ENCODE measurements at regions of chr5 and their contacts with region 1.

Region 1: DNA sequence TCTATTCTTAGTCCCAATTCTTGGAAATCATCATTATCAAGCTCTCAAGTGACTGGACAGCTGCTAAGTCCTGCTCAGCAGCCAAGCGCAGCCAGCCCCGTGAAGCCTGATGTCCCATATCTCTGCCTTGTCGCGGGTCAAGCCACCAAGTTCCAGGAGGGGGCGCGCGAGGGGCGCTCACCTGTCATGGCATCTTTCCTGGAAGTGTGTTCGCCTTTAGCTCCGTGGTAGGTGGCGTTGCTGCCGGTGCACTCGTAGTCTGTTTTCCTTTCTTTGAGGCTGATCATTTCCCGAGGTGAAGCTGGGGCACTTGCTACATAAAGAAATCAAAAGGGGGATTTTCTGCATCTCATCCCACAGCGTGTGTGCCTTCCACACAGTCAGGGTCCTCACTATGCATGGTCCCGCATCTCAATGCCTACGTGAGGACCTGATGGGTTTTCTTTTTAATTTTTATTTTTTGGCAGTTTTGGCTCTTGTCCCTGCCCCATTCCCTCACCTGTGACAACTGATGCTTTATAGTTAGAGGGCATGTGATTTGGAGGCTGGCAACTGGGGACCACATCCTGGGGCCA is 227.0 kb upstream of the DAP start:
- DNase-seq: peak; percentile 87
- H3K4me3 Mint-ChIP-seq: peak overlapping the region; percentile 32
- H3K27ac Mint-ChIP-seq: peak overlapping the region; percentile 15
- H3K4me1 Mint-ChIP-seq: peaks cover 9% of the 10 kb centered on the region
- H3K27me3 Mint-ChIP-seq: peaks cover 22% of the 10 kb centered on the region

Region 2: DNA sequence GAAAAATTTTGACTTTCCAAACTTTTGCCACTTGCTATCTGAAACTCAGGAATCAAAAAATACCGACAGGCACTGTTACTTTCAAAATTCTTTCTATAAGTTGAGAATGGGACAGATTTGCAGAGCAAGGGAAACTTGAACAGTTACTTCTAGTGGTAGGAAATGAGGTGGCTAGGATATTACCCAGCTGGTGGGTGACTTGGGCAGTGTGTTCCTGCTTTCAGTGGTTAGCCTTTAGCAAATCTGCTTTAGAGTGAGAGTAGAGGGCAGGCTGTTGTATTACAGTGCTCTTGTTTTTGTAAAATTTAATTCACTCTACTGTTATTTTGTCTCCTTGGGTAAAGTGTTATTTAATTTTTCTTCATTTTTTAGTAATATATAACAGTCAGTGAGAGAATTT is 586.5 kb before region 1 on chr5:
- CTCF ChIA-PET with region 1: no interaction called
- intact Hi-C with region 1: no loop called
- DNase-seq: no peak
- H3K4me3 Mint-ChIP-seq: no peak overlapping the region
- H3K27ac Mint-ChIP-seq: no peak overlapping the region
- H3K4me1 Mint-ChIP-seq: no peaks in the 10 kb centered on the region
- H3K27me3 Mint-ChIP-seq: no peaks in the 10 kb centered on the region

Region 3: GRCh38 chr5:10695055-10695649 is 292.9 kb before region 1 on chr5:
- CTCF ChIA-PET with region 1: no interaction called
- intact Hi-C with region 1: loop called (anchors 5 kb)
- DNase-seq: peak; percentile 56
- H3K4me3 Mint-ChIP-seq: no peak overlapping the region
- H3K27ac Mint-ChIP-seq: no peak overlapping the region
- H3K4me1 Mint-ChIP-seq: peaks cover 39% of the 10 kb centered on the region
- H3K27me3 Mint-ChIP-seq: no peaks in the 10 kb centered on the region

Region 4: GRCh38 chr5:10707198-10708142 is 280.5 kb before region 1 on chr5:
- CTCF ChIA-PET with region 1: no interaction called
- intact Hi-C with region 1: no loop called
- DNase-seq: no peak
- H3K4me3 Mint-ChIP-seq: no peak overlapping the region
- H3K27ac Mint-ChIP-seq: no peak overlapping the region
- H3K4me1 Mint-ChIP-seq: peaks cover 30% of the 10 kb centered on the region
- H3K27me3 Mint-ChIP-seq: no peaks in the 10 kb centered on the region

Region 5: DNA sequence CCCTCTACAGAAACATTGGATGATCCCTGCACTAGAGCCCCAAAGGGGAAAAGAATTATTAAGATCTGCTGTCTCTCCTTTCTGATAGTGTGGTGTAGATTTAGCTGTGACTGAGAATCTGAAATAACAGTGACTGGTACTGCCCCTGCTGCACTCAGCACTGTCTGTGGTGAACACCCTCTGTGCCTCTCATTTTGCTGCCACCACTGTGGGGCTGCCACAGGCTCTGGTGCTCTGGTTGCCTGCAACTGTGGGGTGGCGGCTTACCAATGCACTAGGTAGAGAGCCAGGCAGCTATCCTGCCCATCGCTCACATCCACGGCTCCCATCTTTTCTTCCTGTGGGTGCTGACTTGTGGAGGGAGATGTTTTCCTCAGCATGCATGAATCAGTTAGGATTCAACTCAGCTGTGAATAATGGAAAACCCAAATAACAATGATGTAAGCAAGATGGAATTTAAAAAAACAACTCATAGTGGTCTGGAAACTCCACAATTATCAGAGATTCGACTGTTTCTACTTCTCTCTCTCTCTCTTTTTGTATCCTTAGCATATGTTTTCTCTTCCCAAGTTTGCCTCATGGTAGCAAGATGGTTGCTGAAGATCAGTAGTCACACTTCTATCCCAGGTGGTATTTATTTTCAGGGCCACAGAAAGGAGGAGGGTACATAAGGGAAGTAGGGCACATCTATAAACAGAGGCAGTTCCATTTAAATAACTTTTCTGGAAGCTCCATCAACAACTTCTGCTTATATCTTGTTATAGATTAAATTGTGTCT is 127.2 kb before region 1 on chr5:
- CTCF ChIA-PET with region 1: no interaction called
- intact Hi-C with region 1: no loop called
- DNase-seq: no peak
- H3K4me3 Mint-ChIP-seq: no peak overlapping the region
- H3K27ac Mint-ChIP-seq: no peak overlapping the region
- H3K4me1 Mint-ChIP-seq: peaks cover 2% of the 10 kb centered on the region
- H3K27me3 Mint-ChIP-seq: peaks cover 19% of the 10 kb centered on the region

Region 6: DNA sequence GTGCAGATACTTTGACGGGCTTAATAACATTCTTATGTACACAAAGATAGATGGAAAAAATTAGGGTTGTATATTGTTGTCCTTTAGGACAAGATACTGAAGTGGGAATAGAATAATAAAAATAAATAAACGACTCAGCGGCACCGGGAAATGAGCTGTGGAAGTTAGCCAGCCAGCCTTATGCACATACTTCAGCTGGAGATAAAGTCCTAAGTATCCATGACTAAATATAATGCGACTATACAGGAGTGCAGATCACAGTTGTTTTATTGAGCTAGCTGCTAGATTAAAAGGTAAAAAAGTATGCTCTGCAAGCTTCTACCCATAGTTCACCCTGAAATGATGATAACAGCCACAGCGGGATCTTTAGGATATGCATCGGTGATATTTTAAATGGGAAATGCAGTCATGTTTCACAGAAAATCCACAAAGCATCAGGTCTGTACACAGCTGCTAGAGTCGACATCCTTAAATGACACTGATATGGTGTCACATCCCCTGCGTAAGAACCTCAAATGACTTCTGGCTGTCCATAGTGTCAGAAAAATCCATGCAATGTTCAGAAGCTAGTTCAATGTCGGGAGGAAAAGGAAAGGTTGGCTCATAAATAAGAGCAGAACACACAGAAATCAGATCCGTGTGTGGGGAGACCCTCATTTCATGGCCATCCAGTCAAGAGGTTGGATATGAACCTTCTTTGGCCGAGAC is 165.8 kb after region 1 on chr5:
- CTCF ChIA-PET with region 1: no interaction called
- intact Hi-C with region 1: no loop called
- DNase-seq: no peak
- H3K4me3 Mint-ChIP-seq: no peak overlapping the region
- H3K27ac Mint-ChIP-seq: no peak overlapping the region
- H3K4me1 Mint-ChIP-seq: no peaks in the 10 kb centered on the region
- H3K27me3 Mint-ChIP-seq: peaks cover 6% of the 10 kb centered on the region

Region 7: DNA sequence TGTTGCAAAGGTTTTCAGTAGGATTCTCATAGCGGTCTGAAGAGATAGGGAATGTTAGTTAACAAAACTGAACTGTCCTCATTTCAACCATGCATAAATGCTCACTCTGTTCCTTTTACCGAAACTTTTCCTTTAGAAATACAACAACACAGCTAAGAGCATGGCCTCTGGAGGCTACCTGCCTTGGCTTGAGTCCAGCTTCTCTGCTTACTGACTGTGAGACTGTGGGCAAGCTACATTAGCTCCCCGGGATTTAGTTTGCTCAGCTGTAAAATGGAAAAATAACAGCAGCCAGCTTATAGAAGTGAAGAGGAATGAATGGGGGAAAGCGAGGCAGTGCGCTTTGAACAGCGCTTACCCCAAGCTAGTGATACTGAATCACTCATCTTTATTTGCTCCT is 280.9 kb after region 1 on chr5:
- CTCF ChIA-PET with region 1: interaction called, 3 read pairs
- intact Hi-C with region 1: loop called (anchors 5 kb)
- DNase-seq: no peak
- H3K4me3 Mint-ChIP-seq: no peak overlapping the region
- H3K27ac Mint-ChIP-seq: no peak overlapping the region
- H3K4me1 Mint-ChIP-seq: no peaks in the 10 kb centered on the region
- H3K27me3 Mint-ChIP-seq: peaks cover 6% of the 10 kb centered on the region

Region 8: DNA sequence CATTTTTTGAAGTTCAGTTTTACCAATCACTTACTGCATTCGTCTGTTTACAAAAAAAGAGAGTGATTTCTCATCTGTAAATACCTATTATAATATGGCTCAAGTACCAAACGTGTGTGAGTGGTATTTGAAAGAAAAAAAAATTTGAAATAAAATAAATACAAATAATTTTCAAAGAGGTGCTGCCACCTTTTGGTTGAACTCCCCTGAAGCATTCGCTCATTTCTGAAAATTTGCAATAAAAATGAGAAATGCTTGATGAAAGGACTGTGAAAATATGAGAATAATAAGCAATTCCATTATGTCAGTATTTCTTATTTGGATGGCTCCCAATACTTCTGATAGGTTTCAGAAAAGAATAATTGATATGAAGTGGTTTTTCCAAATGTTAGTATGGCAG is 506.3 kb after region 1 on chr5:
- CTCF ChIA-PET with region 1: interaction called, 3 read pairs
- intact Hi-C with region 1: loop called (anchors 1 kb)
- DNase-seq: no peak
- H3K4me3 Mint-ChIP-seq: no peak overlapping the region
- H3K27ac Mint-ChIP-seq: no peak overlapping the region
- H3K4me1 Mint-ChIP-seq: no peaks in the 10 kb centered on the region
- H3K27me3 Mint-ChIP-seq: peaks cover 3% of the 10 kb centered on the region

Measured in activated naive CD4-positive, alpha-beta T cell treated with anti-CD3 and anti-CD28 coated beads for 36 hours (primary cell).